CD14-positive monocyte (primary cell): ENCODE measurements at regions of chr2 and their contacts with region 1.

Region 1: DNA sequence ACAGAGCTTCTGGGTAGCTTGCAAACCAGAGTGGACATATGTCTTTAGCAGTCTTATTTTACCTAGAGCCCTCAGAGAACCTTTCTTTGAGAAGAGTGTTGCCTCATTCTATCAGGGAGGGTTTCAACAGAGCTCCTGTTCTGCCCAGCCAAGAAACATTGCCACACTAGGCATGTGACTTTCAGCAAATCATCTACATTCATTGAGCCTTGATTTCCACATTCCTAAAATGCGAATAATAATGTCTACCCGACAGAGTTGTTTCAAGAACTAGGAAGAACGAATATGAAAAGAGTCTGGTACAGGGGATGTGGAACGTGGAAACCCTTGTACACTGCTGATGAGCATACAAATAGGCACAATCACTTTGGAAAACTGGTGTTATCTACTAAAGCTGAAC is 7.8 kb upstream of the PRKAG3 start:
- DNase-seq: peak; percentile 77 to 89 (median 88)
- H3K4me3 ChIP-seq: peak overlapping the region in 1 of 3 experiments; percentile 24
- H3K4me3 Mint-ChIP-seq: peak overlapping the region in 1 of 2 donors; percentile 49
- H3K27ac ChIP-seq: peak overlapping the region; percentile 56 to 78
- H3K27ac Mint-ChIP-seq: peak overlapping the region; percentile 89 to 98 (median 94)
- H3K4me1 ChIP-seq: peaks cover 15 to 23% of the 10 kb centered on the region in 2 donors
- H3K4me1 Mint-ChIP-seq: peaks cover 26% of the 10 kb centered on the region
- H3K27me3 ChIP-seq: peaks cover 10 to 11% of the 10 kb centered on the region in 2 donors
- H3K27me3 Mint-ChIP-seq: peaks cover 5 to 18% (median 15%) of the 10 kb centered on the region in 3 donors
- CTCF ChIP-seq: no peak

Region 2: GRCh38 chr2:218733171-218734021 is 106.0 kb before region 1 on chr2:
- intact Hi-C with region 1: loop called in 1 of 2 experiments (anchors 5 kb)
- DNase-seq: peak; percentile 98 to 100 (median 98)
- H3K4me3 ChIP-seq: peak overlapping the region in 1 of 3 experiments; percentile 8
- H3K4me3 Mint-ChIP-seq: peak overlapping the region; percentile 31 to 57
- H3K27ac ChIP-seq: peak overlapping the region; percentile 95 to 99
- H3K27ac Mint-ChIP-seq: peak overlapping the region; percentile 98 to 100 (median 100)
- H3K4me1 ChIP-seq: peaks cover 51 to 54% of the 10 kb centered on the region in 2 donors
- H3K4me1 Mint-ChIP-seq: peaks cover 67% of the 10 kb centered on the region
- H3K27me3 ChIP-seq: no peaks in the 10 kb centered on the region
- H3K27me3 Mint-ChIP-seq: peaks cover 0 to 1% (median 0%) of the 10 kb centered on the region in 3 donors
- CTCF ChIP-seq: no peak

Region 3: DNA sequence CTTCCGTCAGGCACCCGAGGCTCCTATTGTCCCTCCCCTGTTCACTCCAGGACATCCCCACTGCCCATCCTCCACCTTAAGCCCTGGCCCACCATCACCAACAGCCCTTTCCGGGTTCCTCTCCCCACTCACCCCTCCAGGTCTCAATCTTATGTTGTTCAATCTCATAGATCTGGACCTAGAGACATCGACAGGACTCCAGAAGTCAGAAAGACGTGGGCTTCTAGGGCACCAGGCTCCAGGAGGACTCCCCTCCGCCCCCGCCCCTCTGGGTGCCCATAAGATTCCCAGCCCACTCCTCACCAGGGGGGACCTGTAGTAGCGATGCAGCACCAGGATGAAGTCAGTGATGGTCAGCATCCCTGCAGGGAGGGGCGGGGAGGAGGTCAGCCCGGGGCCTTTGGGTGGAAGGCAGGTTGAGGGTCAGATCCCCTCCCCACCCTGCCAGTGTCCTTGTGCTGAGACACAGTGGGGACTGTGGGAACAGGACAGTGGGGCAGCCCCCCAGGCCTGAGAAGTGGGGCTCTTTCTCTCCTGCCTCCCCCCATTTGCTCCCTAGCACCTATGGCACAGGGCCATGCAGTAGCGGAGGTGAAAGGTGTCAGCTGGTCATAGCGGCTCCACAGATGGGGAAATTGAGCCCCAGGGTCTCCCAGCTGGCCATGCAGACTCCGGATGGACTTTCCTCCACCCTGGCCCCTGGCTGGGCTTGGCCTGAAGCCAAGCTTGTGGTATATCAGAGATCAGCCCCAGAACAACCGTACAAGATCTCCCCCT is 11.5 kb before region 1 on chr2:
- intact Hi-C with region 1: no loop called
- DNase-seq: no peak
- H3K4me3 ChIP-seq: no peak overlapping the region
- H3K4me3 Mint-ChIP-seq: no peak overlapping the region
- H3K27ac ChIP-seq: no peak overlapping the region
- H3K27ac Mint-ChIP-seq: no peak overlapping the region
- H3K4me1 ChIP-seq: peaks cover 10 to 22% of the 10 kb centered on the region in 2 donors
- H3K4me1 Mint-ChIP-seq: peaks cover 29% of the 10 kb centered on the region
- H3K27me3 ChIP-seq: peaks cover 4 to 8% of the 10 kb centered on the region in 2 donors
- H3K27me3 Mint-ChIP-seq: peaks cover 24 to 36% (median 28%) of the 10 kb centered on the region in 3 donors
- CTCF ChIP-seq: no peak

Region 4: GRCh38 chr2:219642465-219643080 is 803.1 kb after region 1 on chr2:
- intact Hi-C with region 1: no loop called
- DNase-seq: peak; percentile 92 to 96 (median 93)
- H3K4me3 ChIP-seq: no peak overlapping the region
- H3K4me3 Mint-ChIP-seq: peak overlapping the region in 1 of 2 donors; percentile 19
- H3K27ac ChIP-seq: no peak overlapping the region
- H3K27ac Mint-ChIP-seq: peak overlapping the region in 2 of 7 donors; percentile 62 to 78
- H3K4me1 ChIP-seq: peaks cover 6 to 9% of the 10 kb centered on the region in 2 donors
- H3K4me1 Mint-ChIP-seq: peaks cover 13% of the 10 kb centered on the region
- H3K27me3 ChIP-seq: no peaks in the 10 kb centered on the region
- H3K27me3 Mint-ChIP-seq: peaks cover 8 to 17% (median 14%) of the 10 kb centered on the region in 3 donors
- CTCF ChIP-seq: peak; percentile 99